Sigmoid colon (tissue), 7 donors: ENCODE measurements at regions of chr1 and their contacts with region 1.

Region 1: GRCh38 chr1:111704776-111705175 is 34.4 kb downstream of the INKA2 start:
- DNase-seq: no peak
- H3K4me3 ChIP-seq: no peak overlapping the region
- H3K27ac ChIP-seq: no peak overlapping the region
- H3K4me1 ChIP-seq: peaks cover 0 to 16% (median 13%) of the 10 kb centered on the region in 4 donors
- H3K27me3 ChIP-seq: no peaks in the 10 kb centered on the region
- CTCF ChIP-seq: no peak
- EP300 ChIP-seq: no peak
- POLR2A ChIP-seq: no peak

Region 2: GRCh38 chr1:110963691-110964399 is 740.9 kb before region 1 on chr1 and contains the start of gene LRIF1:
- intact Hi-C with region 1: no loop called
- DNase-seq: peak; percentile 99
- H3K4me3 ChIP-seq: peak within 1 kb of the TSS; percentile 52 to 71 (median 59)
- H3K27ac ChIP-seq: peak within 1 kb of the TSS; percentile 86 to 91 (median 90)
- H3K4me1 ChIP-seq: peaks cover 0 to 17% (median 2%) of the 10 kb centered on the region in 4 donors
- H3K27me3 ChIP-seq: peaks cover 0 to 7% (median 0%) of the 10 kb centered on the region in 3 donors
- CTCF ChIP-seq: peak; percentile 38 to 59 (median 47)
- EP300 ChIP-seq: no peak
- POLR2A ChIP-seq: peak; percentile 80 to 84
- total RNA-seq, gene LRIF1: 4.5 to 10.3 (median 5.6) TPM

Region 3: DNA sequence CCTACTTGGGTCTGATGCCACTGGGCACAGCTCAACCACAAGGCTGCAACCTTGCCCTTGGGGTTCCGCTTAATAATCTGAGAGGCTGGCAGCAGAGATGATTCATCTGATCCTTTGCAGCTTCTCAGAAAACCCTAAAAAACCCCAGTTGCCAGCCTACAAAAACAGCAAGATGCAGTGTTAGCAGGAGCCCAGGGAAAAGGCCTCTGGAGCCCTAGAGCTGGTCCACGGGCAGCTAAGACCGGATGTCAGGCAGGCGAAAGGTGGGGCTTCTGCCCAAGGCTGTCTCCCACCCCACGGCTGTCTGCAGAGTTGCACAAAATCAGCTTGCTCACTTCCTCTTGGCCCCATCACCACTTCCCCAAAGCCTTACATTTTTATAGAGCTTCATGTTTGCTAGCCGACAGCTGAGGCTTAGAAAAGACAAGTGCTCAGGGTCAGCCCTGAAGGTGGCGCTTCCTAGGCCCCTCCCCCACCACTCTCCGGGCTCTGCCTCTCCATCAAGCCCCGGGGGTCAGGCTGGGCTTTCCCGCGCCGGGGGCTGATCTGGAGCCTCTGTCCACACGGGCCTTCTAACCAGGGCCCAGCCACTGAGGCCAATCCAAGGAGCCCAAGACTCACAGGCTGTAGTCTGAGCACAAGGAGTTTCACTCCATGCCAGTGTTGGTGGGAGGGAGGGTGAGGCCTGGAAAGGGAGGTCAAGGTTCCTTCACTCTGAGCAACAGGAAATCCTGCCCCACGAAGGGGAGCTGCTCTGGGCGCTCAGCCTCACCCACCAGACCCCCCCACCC is 197.2 kb before region 1 on chr1:
- intact Hi-C with region 1: loop called (anchors 5 kb)
- DNase-seq: peak; percentile 89
- H3K4me3 ChIP-seq: peak overlapping the region in 3 of 4 donors; percentile 26 to 31 (median 30)
- H3K27ac ChIP-seq: peak overlapping the region; percentile 91 to 95 (median 94)
- H3K4me1 ChIP-seq: peaks cover 0 to 74% (median 60%) of the 10 kb centered on the region in 4 donors
- H3K27me3 ChIP-seq: no peaks in the 10 kb centered on the region
- CTCF ChIP-seq: no peak
- EP300 ChIP-seq: no peak
- POLR2A ChIP-seq: no peak